ENCODE measurements at regions of chr11 and their contacts with region 1.

Region 1: DNA sequence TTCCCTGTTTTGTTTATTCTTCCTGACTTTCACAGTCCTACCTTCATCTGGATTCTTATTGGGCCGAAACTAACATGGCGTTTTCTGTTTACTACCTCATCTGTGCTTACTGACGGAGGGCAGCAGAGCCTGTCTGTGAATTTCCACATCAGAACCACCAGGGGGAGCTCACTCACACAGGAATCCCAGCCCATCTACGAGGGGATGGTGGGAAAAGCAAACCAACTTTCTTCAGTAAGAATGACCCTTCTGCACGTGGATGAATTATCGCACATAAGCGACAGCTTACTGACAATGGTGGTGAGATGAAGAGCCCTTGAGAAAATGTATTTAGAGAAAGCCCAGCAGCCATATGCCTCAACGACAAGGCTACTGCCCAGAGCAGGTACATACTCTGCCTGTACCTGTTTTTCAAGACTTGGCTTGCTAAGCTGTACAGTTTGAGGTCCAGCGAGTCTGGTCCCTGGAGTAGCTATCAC is 42.5 kb downstream of the LARGE2 start:
- DNase-seq: no peak

Region 2: DNA sequence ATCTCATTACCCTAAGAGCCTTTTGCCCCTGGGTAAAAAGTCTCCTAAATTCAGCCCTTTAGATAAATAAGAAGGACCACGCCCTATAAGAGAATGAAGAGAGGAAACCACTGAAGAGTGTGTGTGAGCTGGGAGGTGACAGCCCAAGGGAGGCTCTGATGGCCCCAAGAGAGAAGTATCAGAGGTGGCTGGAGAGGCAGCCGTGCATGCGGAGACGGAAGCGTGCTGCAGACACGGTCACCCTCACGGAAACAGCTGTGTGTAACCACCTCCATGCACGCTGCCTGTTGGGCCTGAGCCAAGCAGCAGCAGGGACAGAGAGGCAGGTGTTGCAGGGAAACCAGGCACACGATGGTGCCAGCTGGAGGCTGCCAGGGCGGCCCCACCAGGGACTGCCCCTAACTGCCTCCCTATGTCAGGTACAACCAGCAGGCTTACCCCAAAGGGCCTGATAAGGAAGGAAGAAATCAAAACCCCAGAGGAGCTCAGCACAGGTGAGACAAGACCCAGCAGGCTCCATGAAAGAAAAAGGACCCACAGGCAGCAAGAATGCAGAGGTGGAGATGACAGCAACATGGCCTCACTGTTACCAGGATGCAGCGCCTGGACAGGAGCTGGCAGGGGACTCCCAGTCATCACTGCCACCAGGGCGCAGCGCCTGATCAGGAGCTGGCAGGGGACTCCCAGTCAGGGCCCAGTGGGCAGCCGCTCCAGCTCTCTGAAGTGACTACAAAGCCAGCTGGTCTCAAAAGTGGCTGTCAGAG is 34.7 kb before region 1 on chr11:
- intact Hi-C with region 1: no loop called
- DNase-seq: peak; percentile 79

Region 3: GRCh38 chr11:46003574-46003973 is 38.6 kb after region 1 on chr11:
- intact Hi-C with region 1: loop called in 1 of 2 experiments (anchors 5 kb)
- DNase-seq: no peak

Region 4: DNA sequence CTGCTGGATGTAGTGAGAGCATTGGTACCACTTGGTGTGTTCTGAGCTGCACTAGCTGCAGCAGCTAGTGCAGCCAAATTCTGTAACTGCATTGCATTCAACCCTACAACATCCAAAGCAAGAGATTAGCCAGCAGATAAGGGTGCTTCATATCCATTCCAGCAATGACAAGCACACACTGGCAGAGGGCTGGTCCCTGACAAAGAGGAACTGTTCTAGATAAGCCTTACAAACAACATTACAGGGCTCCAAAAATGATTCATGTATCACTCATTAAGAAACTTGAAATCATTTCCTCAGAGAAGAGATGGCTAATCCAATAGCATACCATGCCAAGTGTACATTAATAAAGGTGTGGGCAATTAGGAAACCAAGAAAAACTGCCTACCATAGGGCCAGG is 1512.4 kb after region 1 on chr11:
- intact Hi-C with region 1: no loop called
- DNase-seq: no peak